HCT116 (cell line): ENCODE measurements at regions of chr7 and their contacts with region 1.

Region 1: GRCh38 chr7:128209229-128210035 is 31.6 kb upstream of the LEP start:
- DNase-seq: peak; percentile 63
- ATAC-seq: peak; percentile 74
- H3K4me3 ChIP-seq: no peak overlapping the region
- H3K27ac ChIP-seq: no peak overlapping the region
- H3K4me1 ChIP-seq: no peaks in the 10 kb centered on the region
- H3K27me3 ChIP-seq: no peaks in the 10 kb centered on the region; the same call in 1 of the 2 replicates
- CTCF ChIP-seq: peak; percentile 98 to 99 (median 98)
- POLR2A ChIP-seq: no peak
- RAD21 ChIP-seq: peak; percentile 100

Region 2: GRCh38 chr7:127504715-127505114 is 704.7 kb before region 1 on chr7:
- CTCF ChIA-PET with region 1: interaction called, 11 read pairs
- POLR2A ChIA-PET with region 1: no interaction called
- RAD21 ChIA-PET with region 1: no interaction called
- intact Hi-C with region 1: no loop called
- DNase-seq: no peak
- ATAC-seq: peak; percentile 93
- H3K4me3 ChIP-seq: no peak overlapping the region
- H3K27ac ChIP-seq: no peak overlapping the region
- H3K4me1 ChIP-seq: no peaks in the 10 kb centered on the region
- H3K27me3 ChIP-seq: peaks cover 27% of the 10 kb centered on the region
- CTCF ChIP-seq: peak; percentile 49 to 84 (median 74); a peak in 5 of 6 replicates
- POLR2A ChIP-seq: no peak
- RAD21 ChIP-seq: peak; percentile 56

Region 3: GRCh38 chr7:127598318-127598717 is 611.1 kb before region 1 on chr7:
- CTCF ChIA-PET with region 1: interaction called, 4 read pairs
- POLR2A ChIA-PET with region 1: no interaction called
- RAD21 ChIA-PET with region 1: no interaction called
- intact Hi-C with region 1: loop called (anchors 2 kb)
- DNase-seq: peak; percentile 49
- ATAC-seq: peak; percentile 97
- H3K4me3 ChIP-seq: no peak overlapping the region
- H3K27ac ChIP-seq: no peak overlapping the region
- H3K4me1 ChIP-seq: peaks cover 0 to 5% of the 10 kb centered on the region in 2 experiments; a peak in 2 of 4 replicates
- H3K27me3 ChIP-seq: peaks cover 5% of the 10 kb centered on the region; the same call in 1 of the 2 replicates
- CTCF ChIP-seq: peak; percentile 91 to 99 (median 97)
- POLR2A ChIP-seq: no peak
- RAD21 ChIP-seq: peak; percentile 75

Region 4: GRCh38 chr7:128035712-128036111 is 173.7 kb before region 1 on chr7:
- CTCF ChIA-PET with region 1: interaction called, 10 read pairs
- POLR2A ChIA-PET with region 1: no interaction called
- RAD21 ChIA-PET with region 1: interaction called in 1 of 2 experiments, 4 read pairs
- intact Hi-C with region 1: loop called (anchors 1 kb)
- DNase-seq: no peak
- ATAC-seq: peak; percentile 81
- H3K4me3 ChIP-seq: no peak overlapping the region
- H3K27ac ChIP-seq: no peak overlapping the region
- H3K4me1 ChIP-seq: peaks cover 2 to 15% of the 10 kb centered on the region in 2 experiments; a peak in 3 of 4 replicates
- H3K27me3 ChIP-seq: no peaks in the 10 kb centered on the region
- CTCF ChIP-seq: peak; percentile 35 to 55 (median 47); a peak in 5 of 6 replicates
- POLR2A ChIP-seq: no peak
- RAD21 ChIP-seq: peak; percentile 45; the same call in 1 of the 2 replicates

Region 5: DNA sequence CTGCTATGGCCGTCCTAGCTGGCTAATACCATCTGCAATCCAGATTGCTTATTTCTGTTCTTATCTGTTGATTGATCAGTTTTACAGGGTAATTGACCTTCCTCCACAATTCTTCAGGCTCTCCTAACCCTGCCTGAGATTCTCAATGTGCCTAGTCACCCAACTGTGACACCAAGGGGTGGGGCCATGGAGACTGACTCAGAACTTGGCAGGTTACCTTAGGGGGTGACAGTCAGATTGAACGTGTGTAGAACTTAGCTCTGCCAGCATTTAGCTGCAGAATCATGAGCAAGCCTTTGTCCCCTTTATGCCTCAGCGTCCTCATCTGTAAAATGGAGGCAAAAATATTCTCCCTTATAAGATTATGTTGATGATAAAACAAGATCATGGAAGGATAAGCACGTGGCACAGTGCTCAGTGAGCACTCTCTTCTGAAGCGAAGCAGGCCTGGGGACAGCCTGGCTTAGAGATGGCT is 12.5 kb after region 1 on chr7:
- CTCF ChIA-PET with region 1: interaction called, 14 read pairs
- POLR2A ChIA-PET with region 1: no interaction called
- RAD21 ChIA-PET with region 1: no interaction called
- intact Hi-C with region 1: no loop called
- DNase-seq: peak; percentile 47
- ATAC-seq: peak; percentile 94
- H3K4me3 ChIP-seq: 0 out of 4 replicates have a peak overlapping the region, but pooled peaks of 1 of the 2 experiments have one; percentile 9
- H3K27ac ChIP-seq: no peak overlapping the region
- H3K4me1 ChIP-seq: peaks cover 6 to 15% of the 10 kb centered on the region in 2 experiments
- H3K27me3 ChIP-seq: no peaks in the 10 kb centered on the region
- CTCF ChIP-seq: no peak
- POLR2A ChIP-seq: no peak
- RAD21 ChIP-seq: no peak